WTC11 (cell line): ENCODE measurements at regions of chr11 and their contacts with region 1.

Region 1: GRCh38 chr11:18203723-18204122 is 31.1 kb downstream of the MRGPRX4 start:
- DNase-seq: peak; percentile 55
- ATAC-seq: peak; percentile 100
- H3K4me3 Mint-ChIP-seq: peak overlapping the region; percentile 31; the same call in 1 of the 2 replicates
- H3K27ac Mint-ChIP-seq: no peak overlapping the region
- H3K4me1 Mint-ChIP-seq: no peaks in the 10 kb centered on the region
- H3K27me3 Mint-ChIP-seq: peaks cover 1% of the 10 kb centered on the region
- CTCF ChIP-seq: peak; percentile 63

Region 2: DNA sequence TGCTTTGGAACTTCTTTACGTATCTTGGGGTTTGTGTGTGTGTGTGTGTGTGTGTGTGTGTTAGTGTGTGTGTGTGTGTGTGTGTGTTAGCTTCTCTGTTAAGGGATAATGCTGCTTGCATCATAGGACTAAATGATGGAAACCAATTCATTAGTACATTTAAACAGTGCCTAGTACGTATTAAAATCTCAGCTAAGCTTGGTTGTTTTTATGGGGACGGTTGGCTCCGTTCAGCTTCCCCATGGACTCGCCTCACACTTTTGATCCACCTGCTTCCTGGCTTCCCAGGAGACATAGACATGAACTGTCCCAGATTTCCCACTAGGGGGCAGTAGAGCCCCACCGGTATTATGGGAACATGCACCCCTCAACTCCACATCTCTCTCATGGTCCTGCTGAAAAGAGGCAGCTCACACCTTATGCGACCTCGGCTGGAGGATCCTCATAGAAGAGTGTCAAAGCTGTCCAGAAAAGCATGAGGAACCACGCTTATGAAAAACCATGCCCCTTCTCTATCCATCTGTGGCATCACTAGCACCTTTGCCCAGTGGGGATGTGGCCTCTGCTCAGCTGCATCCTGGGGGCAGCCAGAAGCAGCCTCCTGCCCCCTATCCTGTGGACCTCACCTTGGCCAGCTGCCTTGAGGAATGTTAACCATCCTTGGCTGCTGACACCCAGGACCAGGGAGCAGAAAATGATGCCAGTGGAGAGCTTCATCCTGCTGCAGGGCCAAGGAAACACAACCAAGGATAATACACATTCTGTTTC is 88.2 kb before region 1 on chr11:
- CTCF ChIA-PET with region 1: interaction called, 194 read pairs
- POLR2A ChIA-PET with region 1: interaction called, 3 read pairs
- DNase-seq: peak; percentile 83
- ATAC-seq: peak; percentile 99
- H3K4me3 Mint-ChIP-seq: 0 out of 2 replicates have a peak overlapping the region, but pooled peaks have one; percentile 25
- H3K27ac Mint-ChIP-seq: no peak overlapping the region
- H3K4me1 Mint-ChIP-seq: no peaks in the 10 kb centered on the region
- H3K27me3 Mint-ChIP-seq: peaks cover 43% of the 10 kb centered on the region
- CTCF ChIP-seq: peak; percentile 87

Region 3: GRCh38 chr11:18193010-18193409 is 10.7 kb before region 1 on chr11:
- CTCF ChIA-PET with region 1: interaction called, 26 read pairs
- POLR2A ChIA-PET with region 1: no interaction called
- DNase-seq: peak; percentile 56
- ATAC-seq: peak; percentile 100
- H3K4me3 Mint-ChIP-seq: no peak overlapping the region
- H3K27ac Mint-ChIP-seq: no peak overlapping the region
- H3K4me1 Mint-ChIP-seq: peaks cover 12% of the 10 kb centered on the region
- H3K27me3 Mint-ChIP-seq: peaks cover 4% of the 10 kb centered on the region; the same call in 1 of the 2 replicates
- CTCF ChIP-seq: no peak

Region 4: DNA sequence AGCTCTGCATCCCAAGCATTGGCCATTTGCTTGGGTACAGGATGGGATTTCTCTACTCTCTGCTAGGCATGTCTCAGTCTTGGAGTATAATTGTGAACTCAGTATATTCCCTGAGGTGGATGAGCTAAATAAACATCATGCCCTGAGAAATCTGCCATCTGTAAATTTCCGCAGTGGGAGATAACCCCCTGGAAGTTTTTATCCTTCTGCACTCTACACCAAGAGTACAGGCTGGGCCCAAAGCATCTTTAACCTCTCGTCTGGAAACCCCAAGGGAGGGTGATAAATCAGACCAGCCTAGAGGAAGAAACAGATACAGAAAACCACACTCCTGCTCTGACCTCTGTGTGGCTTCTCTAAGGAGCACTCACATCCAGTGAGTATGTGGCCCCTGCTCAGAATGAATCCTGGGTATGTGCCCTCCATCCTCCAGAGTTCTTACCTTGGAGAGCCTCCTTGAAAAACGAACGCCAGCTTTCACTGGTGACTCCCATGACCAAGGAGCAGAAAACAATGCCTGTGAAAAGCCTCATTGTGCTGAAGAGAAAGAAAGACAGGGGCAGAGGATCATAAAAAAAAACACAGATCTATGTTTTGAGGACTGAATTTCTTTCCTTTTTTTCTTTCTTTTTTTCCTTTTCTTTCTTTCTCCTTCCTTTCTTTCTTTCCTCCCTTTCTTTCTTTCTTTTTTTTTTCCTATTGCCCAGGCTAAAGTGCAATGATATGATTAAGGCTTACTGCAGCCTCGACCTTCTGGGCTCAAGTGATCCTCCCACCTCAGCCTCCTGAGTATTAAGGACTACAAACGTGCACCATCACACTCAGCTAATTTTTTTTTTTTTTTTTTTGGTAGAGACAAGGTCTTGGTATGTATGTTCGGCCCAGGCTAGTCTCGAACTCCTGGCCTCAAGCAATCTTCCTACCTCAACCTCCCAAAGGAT is 31.9 kb after region 1 on chr11:
- CTCF ChIA-PET with region 1: interaction called, 11 read pairs
- POLR2A ChIA-PET with region 1: no interaction called
- DNase-seq: no peak
- ATAC-seq: no peak; the same call in 1 of the 2 replicates
- H3K4me3 Mint-ChIP-seq: no peak overlapping the region
- H3K27ac Mint-ChIP-seq: no peak overlapping the region
- H3K4me1 Mint-ChIP-seq: no peaks in the 10 kb centered on the region
- H3K27me3 Mint-ChIP-seq: peaks cover 14% of the 10 kb centered on the region; the same call in 1 of the 2 replicates
- CTCF ChIP-seq: no peak

Region 5: DNA sequence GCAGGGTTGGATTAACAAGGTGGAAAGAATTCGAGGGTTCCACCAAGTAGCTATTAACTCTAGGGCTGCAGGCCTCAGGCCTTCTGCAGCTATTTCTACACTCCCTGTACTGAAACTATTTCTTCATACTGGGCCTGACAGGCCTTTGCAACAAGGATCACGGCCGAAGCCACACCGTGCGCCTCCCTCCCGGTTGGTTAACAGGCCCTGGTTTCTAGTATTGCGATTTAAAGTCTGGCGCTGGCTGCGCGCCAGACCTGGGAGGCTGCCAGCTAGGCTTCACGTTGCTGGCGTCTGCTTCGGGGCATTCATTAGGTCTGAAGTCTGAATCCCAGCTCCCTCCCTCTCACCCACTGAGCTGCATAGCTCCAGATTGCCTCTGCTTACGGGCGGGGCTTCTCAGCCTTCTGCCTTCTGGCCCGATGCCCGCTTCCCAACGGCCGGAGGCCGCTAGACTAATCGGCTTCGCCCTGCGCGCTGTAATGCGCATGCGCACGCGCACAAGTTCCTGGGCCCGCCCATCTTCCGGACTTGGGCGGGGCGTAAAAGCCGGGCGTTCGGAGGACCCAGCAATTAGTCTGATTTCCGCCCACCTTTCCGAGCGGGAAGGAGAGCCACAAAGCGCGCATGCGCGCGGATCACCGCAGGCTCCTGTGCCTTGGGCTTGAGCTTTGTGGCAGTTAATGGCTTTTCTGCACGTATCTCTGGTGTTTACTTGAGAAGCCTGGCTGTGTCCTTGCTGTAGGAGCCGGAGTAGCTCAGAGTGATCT is 192.2 kb after region 1 on chr11:
- CTCF ChIA-PET with region 1: interaction called, 10 read pairs
- POLR2A ChIA-PET with region 1: no interaction called
- DNase-seq: peak; percentile 97
- ATAC-seq: peak; percentile 86
- H3K4me3 Mint-ChIP-seq: peak overlapping the region; percentile 98
- H3K27ac Mint-ChIP-seq: peak overlapping the region; percentile 96
- H3K4me1 Mint-ChIP-seq: peaks cover 25% of the 10 kb centered on the region
- H3K27me3 Mint-ChIP-seq: peaks cover 9% of the 10 kb centered on the region
- CTCF ChIP-seq: no peak